ENCODE measurements at regions of chr6 and their contacts with region 1.

Region 1: GRCh38 chr6:85482905-85483700 is 33.2 kb downstream of the NT5E start:
- DNase-seq: peak; percentile 91
- ATAC-seq: peak; percentile 96
- H3K4me3 Mint-ChIP-seq: no peak overlapping the region
- H3K27ac Mint-ChIP-seq: peak overlapping the region; percentile 36
- H3K4me1 Mint-ChIP-seq: peaks cover 17% of the 10 kb centered on the region
- H3K27me3 Mint-ChIP-seq: no peaks in the 10 kb centered on the region
- CTCF ChIP-seq: peak; percentile 99

Region 2: GRCh38 chr6:85323435-85324040 is 159.6 kb before region 1 on chr6:
- CTCF ChIA-PET with region 1: interaction called, 14 read pairs
- POLR2A ChIA-PET with region 1: no interaction called
- intact Hi-C with region 1: no loop called
- DNase-seq: peak; percentile 91
- ATAC-seq: peak; percentile 75
- H3K4me3 Mint-ChIP-seq: no peak overlapping the region
- H3K27ac Mint-ChIP-seq: no peak overlapping the region
- H3K4me1 Mint-ChIP-seq: no peaks in the 10 kb centered on the region
- H3K27me3 Mint-ChIP-seq: peaks cover 7% of the 10 kb centered on the region
- CTCF ChIP-seq: peak; percentile 87

Region 3: GRCh38 chr6:85372188-85372914 is 110.8 kb before region 1 on chr6:
- CTCF ChIA-PET with region 1: interaction called, 13 read pairs
- POLR2A ChIA-PET with region 1: no interaction called
- intact Hi-C with region 1: no loop called
- DNase-seq: peak; percentile 7
- ATAC-seq: peak; percentile 69
- H3K4me3 Mint-ChIP-seq: no peak overlapping the region
- H3K27ac Mint-ChIP-seq: no peak overlapping the region
- H3K4me1 Mint-ChIP-seq: peaks cover 15% of the 10 kb centered on the region
- H3K27me3 Mint-ChIP-seq: no peaks in the 10 kb centered on the region
- CTCF ChIP-seq: no peak

Region 4: GRCh38 chr6:85421997-85422401 is 61.1 kb before region 1 on chr6:
- CTCF ChIA-PET with region 1: interaction called, 19 read pairs
- POLR2A ChIA-PET with region 1: no interaction called
- intact Hi-C with region 1: no loop called
- DNase-seq: no peak
- ATAC-seq: no peak
- H3K4me3 Mint-ChIP-seq: no peak overlapping the region
- H3K27ac Mint-ChIP-seq: no peak overlapping the region
- H3K4me1 Mint-ChIP-seq: peaks cover 23% of the 10 kb centered on the region
- H3K27me3 Mint-ChIP-seq: no peaks in the 10 kb centered on the region
- CTCF ChIP-seq: no peak

Region 5: GRCh38 chr6:85472749-85473148 is 10.4 kb before region 1 on chr6:
- CTCF ChIA-PET with region 1: interaction called, 364 read pairs
- POLR2A ChIA-PET with region 1: no interaction called
- intact Hi-C with region 1: no loop called
- DNase-seq: no peak
- ATAC-seq: no peak
- H3K4me3 Mint-ChIP-seq: no peak overlapping the region
- H3K27ac Mint-ChIP-seq: no peak overlapping the region
- H3K4me1 Mint-ChIP-seq: peaks cover 10% of the 10 kb centered on the region
- H3K27me3 Mint-ChIP-seq: no peaks in the 10 kb centered on the region
- CTCF ChIP-seq: no peak

Region 6: DNA sequence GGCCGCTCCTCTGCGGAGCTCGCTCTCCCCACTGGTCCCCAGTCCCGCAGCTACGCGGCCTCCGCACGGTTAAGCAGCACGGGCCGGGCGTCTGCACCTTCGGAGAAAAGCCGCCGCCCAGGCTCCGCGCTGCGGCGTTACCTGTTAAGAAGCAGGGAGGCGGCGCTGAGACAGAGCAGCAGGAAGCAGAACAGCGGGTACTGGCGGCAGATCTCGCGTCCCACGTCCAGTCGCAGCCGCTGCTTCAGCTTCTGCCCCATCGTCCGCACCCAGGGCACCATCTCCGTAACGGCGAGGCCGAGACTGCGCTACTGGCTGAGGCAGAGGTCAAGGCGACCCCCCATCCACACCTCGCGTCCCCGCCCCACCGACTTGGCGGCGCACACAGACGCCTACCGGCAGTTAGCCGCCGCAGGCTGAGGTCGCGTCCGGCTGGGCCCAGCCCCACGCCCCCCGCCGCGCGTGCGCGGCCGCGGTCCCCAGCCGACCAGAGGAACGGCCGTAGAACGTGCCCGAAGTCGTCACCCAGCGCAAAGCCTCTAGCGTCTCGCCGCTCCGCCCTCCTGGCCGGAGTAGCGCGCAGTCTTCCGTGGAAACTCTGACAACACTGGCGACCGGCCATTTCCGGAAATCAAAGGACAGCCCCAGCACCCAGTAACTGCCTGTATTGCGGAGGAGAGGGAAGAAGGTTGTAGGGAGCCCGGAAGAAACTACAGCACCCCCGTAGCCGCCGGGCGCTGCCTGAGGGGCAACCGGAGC is 110.5 kb after region 1 on chr6 and contains the start of gene SNX14:
- CTCF ChIA-PET with region 1: interaction called, 11 read pairs
- POLR2A ChIA-PET with region 1: interaction called, 3 read pairs
- intact Hi-C with region 1: no loop called
- DNase-seq: peak; percentile 88
- ATAC-seq: peak; percentile 84
- H3K4me3 Mint-ChIP-seq: peak within 1 kb of the TSS; percentile 99
- H3K27ac Mint-ChIP-seq: peak within 1 kb of the TSS; percentile 97
- H3K4me1 Mint-ChIP-seq: peaks cover 43% of the 10 kb centered on the region
- H3K27me3 Mint-ChIP-seq: no peaks in the 10 kb centered on the region
- CTCF ChIP-seq: no peak
- total RNA-seq, gene SNX14: 53.9 to 54.1 TPM

Measured in activated CD8-positive, alpha-beta T cell treated with anti-CD3 and anti-CD28 coated beads for 36 hours (primary cell).